Activated naive CD4-positive, alpha-beta T cell treated with anti-CD3 and anti-CD28 coated beads, Interleukin-2, amount 10 ng/mL, durations not matched to agents 7 days and 5 days (primary cell): ENCODE measurements at regions of chr19 and their contacts with region 1.

Region 1: GRCh38 chr19:54674021-54674617 is 11.3 kb downstream of the LILRB4 start:
- DNase-seq: no peak
- H3K4me3 Mint-ChIP-seq: no peak overlapping the region
- H3K27ac Mint-ChIP-seq: no peak overlapping the region
- H3K4me1 Mint-ChIP-seq: peaks cover 2% of the 10 kb centered on the region
- H3K27me3 Mint-ChIP-seq: peaks cover 16% of the 10 kb centered on the region

Region 2: GRCh38 chr19:54403054-54403453 is 271.1 kb before region 1 on chr19:
- CTCF ChIA-PET with region 1: no interaction called
- DNase-seq: no peak
- H3K4me3 Mint-ChIP-seq: no peak overlapping the region
- H3K27ac Mint-ChIP-seq: no peak overlapping the region
- H3K4me1 Mint-ChIP-seq: no peaks in the 10 kb centered on the region
- H3K27me3 Mint-ChIP-seq: peaks cover 23% of the 10 kb centered on the region

Region 3: GRCh38 chr19:54473021-54473891 is 200.9 kb before region 1 on chr19 and contains the start of gene CDC42EP5:
- CTCF ChIA-PET with region 1: interaction called, 93 read pairs
- DNase-seq: no peak
- H3K4me3 Mint-ChIP-seq: no peak within 1 kb of the TSS
- H3K27ac Mint-ChIP-seq: no peak within 1 kb of the TSS
- H3K4me1 Mint-ChIP-seq: peaks cover 8% of the 10 kb centered on the region
- H3K27me3 Mint-ChIP-seq: peaks cover 73% of the 10 kb centered on the region

Region 4: DNA sequence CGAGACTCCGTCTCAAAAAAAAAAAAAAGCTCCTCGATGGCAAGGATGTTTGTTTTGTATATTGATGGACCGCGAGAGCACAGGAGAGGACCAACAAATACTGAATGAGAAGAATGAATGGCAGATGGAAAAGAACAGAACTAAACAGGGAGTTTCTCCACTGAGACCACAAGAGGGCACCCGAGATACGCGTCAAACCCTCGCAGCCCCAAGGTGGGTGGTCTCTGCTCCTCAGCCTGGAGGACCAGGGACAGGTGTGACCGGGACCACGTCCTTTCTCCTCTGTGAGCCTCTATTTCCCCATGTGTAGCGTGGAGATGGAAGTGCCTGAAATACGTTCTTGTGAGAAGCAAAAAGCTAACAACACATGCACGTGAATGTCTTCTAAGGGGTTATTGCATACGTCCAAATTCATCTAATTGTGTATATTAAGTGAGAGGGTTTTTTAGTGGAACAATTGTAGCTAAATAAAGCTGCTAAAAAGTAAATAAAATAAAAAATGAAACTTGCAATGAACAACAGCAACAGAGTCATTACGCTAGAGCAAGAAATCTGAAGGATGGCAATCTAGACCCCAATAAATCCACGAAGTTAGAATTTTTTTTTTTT is 192.7 kb before region 1 on chr19:
- CTCF ChIA-PET with region 1: interaction called, 93 read pairs
- DNase-seq: peak; percentile 54
- H3K4me3 Mint-ChIP-seq: no peak overlapping the region
- H3K27ac Mint-ChIP-seq: no peak overlapping the region
- H3K4me1 Mint-ChIP-seq: peaks cover 16% of the 10 kb centered on the region
- H3K27me3 Mint-ChIP-seq: peaks cover 59% of the 10 kb centered on the region

Region 5: GRCh38 chr19:54573330-54573872 is 100.7 kb before region 1 on chr19 and contains the start of gene LILRA2:
- CTCF ChIA-PET with region 1: no interaction called
- DNase-seq: no peak
- H3K4me3 Mint-ChIP-seq: no peak within 1 kb of the TSS
- H3K27ac Mint-ChIP-seq: no peak within 1 kb of the TSS
- H3K4me1 Mint-ChIP-seq: peaks cover 19% of the 10 kb centered on the region
- H3K27me3 Mint-ChIP-seq: peaks cover 69% of the 10 kb centered on the region

Region 6: GRCh38 chr19:54653181-54653809 is 20.8 kb before region 1 on chr19:
- CTCF ChIA-PET with region 1: interaction called, 31 read pairs
- DNase-seq: no peak
- H3K4me3 Mint-ChIP-seq: no peak overlapping the region
- H3K27ac Mint-ChIP-seq: no peak overlapping the region
- H3K4me1 Mint-ChIP-seq: no peaks in the 10 kb centered on the region
- H3K27me3 Mint-ChIP-seq: peaks cover 22% of the 10 kb centered on the region

Region 7: DNA sequence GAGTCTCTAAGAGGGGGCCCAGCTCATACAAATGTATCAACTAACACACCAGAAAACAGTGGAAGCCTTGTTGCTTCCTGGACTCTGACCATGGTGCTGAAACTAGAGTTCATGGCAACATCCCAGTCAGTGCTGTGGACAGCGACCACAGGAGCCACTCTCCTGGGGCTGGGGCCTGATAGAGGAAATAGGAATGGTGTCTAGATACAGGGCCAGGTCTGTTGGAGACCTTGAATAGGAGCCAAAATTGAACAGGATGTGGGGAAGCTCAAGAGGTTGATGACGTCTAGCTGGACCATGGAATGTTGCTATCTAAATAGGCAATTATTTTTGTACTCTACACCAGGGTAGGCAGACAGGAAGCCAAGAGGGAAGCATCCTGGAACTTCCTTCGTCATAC is 10.4 kb after region 1 on chr19:
- CTCF ChIA-PET with region 1: interaction called, 18 read pairs
- DNase-seq: peak; percentile 52
- H3K4me3 Mint-ChIP-seq: no peak overlapping the region
- H3K27ac Mint-ChIP-seq: no peak overlapping the region
- H3K4me1 Mint-ChIP-seq: no peaks in the 10 kb centered on the region
- H3K27me3 Mint-ChIP-seq: no peaks in the 10 kb centered on the region

Region 8: DNA sequence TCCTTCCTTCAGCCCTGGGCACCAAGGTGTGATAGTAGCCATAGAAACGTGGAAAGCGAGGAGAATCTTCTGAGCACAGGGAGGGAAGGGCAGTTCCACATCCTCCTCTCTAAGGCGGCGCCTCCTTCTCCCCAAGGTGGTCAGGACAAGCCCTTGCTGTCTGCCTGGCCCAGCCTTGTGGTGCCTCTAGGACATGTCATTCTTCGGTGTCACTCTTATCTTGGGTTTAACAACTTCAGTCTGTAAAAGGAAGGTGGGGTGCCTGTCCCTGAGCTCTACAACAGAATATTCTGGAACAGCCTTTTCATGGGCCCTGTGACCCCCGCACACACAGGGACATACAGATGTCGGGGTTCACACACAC is 66.0 kb after region 1 on chr19:
- CTCF ChIA-PET with region 1: no interaction called
- DNase-seq: no peak
- H3K4me3 Mint-ChIP-seq: no peak overlapping the region
- H3K27ac Mint-ChIP-seq: no peak overlapping the region
- H3K4me1 Mint-ChIP-seq: no peaks in the 10 kb centered on the region
- H3K27me3 Mint-ChIP-seq: peaks cover 7% of the 10 kb centered on the region